Activated naive CD4-positive, alpha-beta T cell treated with anti-CD3 and anti-CD28 coated beads for 36 hours (primary cell): ENCODE measurements at regions of chr4 and their contacts with region 1.

Region 1: DNA sequence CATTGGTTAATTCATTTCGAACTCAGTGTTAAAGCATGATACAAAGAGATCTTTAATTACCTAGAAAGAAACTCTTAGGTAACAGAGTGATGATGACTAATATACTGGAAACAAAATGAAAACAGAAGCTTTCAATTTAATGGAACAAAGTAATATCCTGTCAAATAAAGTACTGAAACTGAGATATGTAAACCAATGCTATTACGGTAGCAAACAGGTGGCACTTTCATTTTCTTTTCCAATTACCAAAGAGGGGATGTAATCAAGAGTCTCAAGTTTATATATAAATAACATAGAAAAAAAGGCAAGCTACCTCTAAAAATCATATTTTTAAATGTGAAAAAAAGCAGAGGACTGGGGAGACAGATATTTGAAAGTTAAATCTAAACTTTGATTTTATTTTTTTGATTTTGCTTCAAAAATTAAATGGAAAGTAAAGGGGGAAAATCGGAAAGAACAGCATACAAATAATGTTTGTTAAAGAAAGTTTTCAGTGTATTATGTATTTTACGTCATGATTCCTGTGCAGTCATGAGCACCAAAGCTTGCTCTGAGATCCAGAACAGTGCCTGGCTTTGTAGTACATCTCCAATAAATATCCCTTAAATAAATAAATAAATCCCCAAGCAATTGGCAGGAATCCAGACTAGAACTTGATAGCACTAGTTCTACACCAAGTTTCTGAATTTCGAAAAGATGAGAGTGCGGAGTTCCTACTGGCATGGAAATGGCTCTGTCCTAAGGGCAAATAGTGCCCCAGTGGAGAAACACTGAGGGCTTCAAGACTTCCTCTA is 25.0 kb upstream of the RAPGEF2 start:
- DNase-seq: no peak
- H3K4me3 Mint-ChIP-seq: no peak overlapping the region
- H3K27ac Mint-ChIP-seq: peak overlapping the region; percentile 34
- H3K4me1 Mint-ChIP-seq: peaks cover 28% of the 10 kb centered on the region
- H3K27me3 Mint-ChIP-seq: no peaks in the 10 kb centered on the region

Region 2: DNA sequence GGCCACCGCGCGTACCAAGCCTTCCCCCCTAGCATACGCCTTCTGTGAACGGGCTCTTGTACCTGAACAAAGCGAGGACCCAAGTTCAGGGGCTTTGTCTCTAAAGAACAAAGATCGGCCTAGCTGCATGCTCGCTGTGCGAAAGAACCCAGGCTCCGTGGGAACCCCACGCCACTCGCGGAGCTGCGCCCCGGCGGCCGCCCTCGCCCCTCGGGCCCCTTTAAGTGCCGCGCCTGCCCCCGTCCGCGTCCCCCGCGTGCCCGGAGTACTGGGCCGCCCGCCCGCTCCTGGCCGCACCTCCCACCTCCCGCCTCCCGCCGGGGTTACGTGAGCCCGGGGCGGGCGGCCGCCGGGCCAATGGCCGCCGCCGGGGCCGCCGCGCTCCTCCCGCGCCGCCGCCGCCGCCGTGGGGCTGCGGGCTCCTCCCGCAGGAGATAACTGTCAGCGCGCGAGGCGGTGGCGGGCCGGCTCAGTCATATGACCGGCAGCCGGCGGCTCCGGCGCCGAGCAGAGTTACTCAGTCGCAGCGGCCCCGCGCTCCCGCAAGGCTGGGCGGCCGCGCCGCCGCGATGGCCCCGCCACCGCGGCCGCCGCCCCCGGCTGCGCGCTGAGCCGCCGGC is 309.2 kb before region 1 on chr4 and contains the start of gene FNIP2:
- CTCF ChIA-PET with region 1: no interaction called
- intact Hi-C with region 1: loop called (anchors 2 kb)
- DNase-seq: peak; percentile 73
- H3K4me3 Mint-ChIP-seq: peak within 1 kb of the TSS; percentile 96
- H3K27ac Mint-ChIP-seq: peak within 1 kb of the TSS; percentile 90
- H3K4me1 Mint-ChIP-seq: peaks cover 39% of the 10 kb centered on the region
- H3K27me3 Mint-ChIP-seq: no peaks in the 10 kb centered on the region
- total RNA-seq, gene FNIP2: 10.1 to 11.3 TPM

Region 3: DNA sequence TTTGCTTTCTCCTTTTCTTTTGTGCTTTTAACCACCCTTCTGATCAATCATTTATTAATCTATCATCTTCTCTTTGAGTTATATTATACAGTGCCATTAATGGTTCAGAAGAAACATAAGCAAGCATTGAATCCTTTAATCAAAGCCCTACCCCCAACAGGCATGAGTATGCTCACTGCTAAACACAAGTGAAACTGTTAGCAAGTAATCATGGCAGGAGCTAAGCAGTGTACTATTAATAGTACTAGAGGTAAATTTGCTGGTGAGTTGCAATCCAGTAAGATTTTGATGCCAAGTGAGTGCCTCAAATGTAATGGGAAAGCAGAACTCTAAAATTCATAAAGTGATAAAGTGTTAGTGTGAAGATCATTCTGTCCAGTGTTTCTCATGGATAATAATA is 251.8 kb before region 1 on chr4:
- CTCF ChIA-PET with region 1: no interaction called
- intact Hi-C with region 1: loop called (anchors 1 kb)
- DNase-seq: no peak
- H3K4me3 Mint-ChIP-seq: no peak overlapping the region
- H3K27ac Mint-ChIP-seq: peak overlapping the region; percentile 59
- H3K4me1 Mint-ChIP-seq: peaks cover 55% of the 10 kb centered on the region
- H3K27me3 Mint-ChIP-seq: no peaks in the 10 kb centered on the region

Region 4: DNA sequence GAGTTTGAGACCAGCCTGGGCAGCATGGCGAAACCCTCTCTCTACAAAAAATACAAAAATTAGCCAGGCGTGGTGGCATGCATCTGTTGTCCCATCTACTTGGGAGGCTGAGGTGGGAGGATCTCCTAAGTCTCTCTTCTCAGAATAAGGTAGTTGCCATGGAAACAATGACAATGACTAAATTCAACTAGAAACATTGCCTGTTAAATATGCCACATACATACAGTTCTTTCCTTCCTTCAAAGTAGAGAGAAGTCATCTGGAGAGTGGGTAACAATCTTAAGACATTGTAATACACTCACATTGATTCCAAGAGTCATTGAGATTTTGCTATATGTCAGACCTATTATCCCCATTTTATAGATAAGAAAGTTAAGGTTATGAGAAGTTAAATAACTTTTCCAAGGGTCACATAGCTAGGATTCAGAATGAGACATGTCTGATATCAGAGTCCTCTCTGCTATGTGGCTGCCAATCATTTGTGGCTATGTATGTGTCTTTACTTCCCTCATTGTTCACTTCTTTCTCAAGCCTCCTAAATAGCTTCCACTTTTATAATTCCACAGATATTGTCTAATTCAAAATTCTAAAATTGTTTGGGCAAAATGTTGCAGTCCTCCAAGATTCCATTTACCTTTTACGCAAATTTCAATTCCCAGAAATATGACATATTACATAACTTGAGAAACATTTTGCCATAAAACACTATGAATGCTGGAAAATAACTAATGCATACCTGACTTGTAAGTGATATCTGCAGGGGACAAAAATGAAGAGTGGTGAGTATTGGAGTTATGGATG is 12.2 kb before region 1 on chr4:
- CTCF ChIA-PET with region 1: interaction called, 3 read pairs
- intact Hi-C with region 1: loop called (anchors 1 kb)
- DNase-seq: no peak
- H3K4me3 Mint-ChIP-seq: no peak overlapping the region
- H3K27ac Mint-ChIP-seq: no peak overlapping the region
- H3K4me1 Mint-ChIP-seq: peaks cover 25% of the 10 kb centered on the region
- H3K27me3 Mint-ChIP-seq: no peaks in the 10 kb centered on the region

Region 5: DNA sequence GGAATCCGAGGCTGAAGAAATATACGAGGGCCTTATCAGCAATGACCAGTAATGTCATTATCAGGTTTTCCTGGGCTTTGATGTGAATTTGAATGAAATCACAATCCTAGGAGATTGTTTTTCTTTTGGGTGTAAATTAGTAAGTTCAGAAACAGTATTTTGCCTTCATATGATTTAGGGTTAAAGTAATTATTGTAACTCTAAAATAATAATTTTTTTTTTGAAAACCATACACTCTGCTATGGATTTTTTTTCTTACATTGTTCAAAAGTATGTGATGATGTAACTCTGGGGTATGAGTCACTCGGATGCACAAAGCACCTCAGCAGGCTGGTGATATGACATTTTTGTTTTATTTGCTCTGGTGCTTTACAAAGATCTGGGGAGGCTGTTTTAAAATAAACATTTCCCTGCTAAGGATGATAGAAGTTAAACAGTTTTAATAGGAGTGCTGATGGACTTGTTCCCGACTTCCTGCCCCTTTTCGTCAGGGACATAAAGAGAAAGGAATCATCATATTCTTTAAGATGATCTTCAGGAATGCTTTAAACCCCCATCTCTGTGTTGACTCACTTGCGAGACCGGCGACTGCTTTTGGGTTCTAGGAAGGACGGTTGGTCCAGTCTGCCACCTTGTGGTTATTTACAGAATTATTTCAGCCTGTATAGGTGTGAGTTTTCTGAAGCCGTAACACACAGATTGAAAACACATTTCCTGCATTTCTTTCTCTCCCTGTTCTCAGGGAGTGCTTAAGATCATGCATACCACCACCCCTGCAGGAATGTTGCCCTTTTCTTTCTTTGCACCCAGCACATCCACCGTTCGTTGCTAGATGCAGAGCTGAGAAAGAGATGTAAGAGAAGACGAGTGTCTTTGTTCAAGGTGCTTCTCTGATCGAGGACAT is 97.4 kb after region 1 on chr4:
- CTCF ChIA-PET with region 1: no interaction called
- intact Hi-C with region 1: loop called (anchors 1 kb)
- DNase-seq: peak; percentile 76
- H3K4me3 Mint-ChIP-seq: peak overlapping the region; percentile 44
- H3K27ac Mint-ChIP-seq: no peak overlapping the region
- H3K4me1 Mint-ChIP-seq: peaks cover 75% of the 10 kb centered on the region
- H3K27me3 Mint-ChIP-seq: peaks cover 3% of the 10 kb centered on the region